ENCODE measurements at regions of chr7 and their contacts with region 1.

Region 1: DNA sequence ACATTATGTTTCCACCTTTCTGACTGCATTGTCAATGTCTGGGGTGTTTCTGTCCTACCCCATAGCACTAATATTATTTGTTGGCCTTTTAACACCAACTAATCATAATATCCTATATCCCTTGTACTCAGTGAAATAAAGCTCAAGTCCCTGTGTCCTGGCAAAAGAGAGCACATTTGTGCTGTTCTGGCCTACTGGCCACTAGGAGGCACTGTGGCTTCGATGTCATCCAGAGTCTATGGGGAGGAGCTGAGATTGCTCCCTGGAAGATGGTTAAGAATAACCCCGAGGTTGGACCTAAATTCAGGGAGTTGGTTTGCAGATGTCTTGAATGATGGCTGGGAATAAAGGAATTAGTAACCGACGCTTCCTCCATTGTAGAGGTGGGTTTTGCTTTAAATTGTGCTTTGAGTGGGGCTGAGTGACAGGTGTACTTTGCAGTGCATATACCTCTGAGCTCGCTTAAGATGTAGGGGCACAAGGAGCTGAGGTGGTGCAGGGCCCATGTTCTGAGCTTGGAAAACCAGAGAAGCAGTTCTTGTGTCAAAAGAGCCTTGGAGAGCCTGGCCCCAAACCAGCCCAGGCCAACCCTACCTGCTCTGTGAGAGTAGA is 191.2 kb upstream of the PRSS1 start:
- DNase-seq: peak; percentile 48
- H3K4me3 ChIP-seq: no peak overlapping the region
- H3K27ac ChIP-seq: peak overlapping the region; percentile 70
- H3K4me1 ChIP-seq: peaks cover 40% of the 10 kb centered on the region
- H3K27me3 ChIP-seq: no peaks in the 10 kb centered on the region
- CTCF ChIP-seq: peak; percentile 62 to 89
- POLR2A ChIP-seq: no peak

Region 2: DNA sequence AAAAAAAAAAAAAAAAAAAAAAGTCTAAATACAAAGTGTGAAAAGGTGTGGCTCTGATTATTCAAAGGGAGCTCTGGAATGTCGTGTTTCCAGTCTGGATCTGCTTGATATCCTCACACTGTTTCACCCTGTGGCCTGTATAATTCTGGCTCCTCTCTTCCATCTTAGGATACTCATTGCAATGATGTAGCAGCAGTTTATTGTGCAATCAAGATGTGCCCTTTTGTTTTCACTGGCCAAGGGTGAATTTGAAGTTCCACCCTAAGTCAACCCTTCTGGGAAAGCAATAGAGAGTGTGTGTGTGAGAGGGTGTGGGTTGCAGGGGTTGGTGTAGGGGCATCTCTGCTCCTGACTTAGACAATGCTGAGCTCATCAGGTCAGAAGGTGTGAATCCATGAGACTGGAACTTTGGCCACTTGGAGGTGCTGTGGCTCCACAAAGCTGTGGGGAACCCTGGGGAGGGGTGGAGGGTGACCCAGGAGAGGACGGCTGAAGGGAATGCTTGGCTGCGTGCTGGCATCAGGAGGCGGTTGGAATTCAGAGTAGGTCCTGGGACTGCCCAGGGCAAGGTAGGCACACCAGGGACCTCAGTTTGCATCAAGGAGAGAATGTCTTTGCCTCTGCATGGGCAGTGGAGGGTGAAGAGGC is 182.3 kb before region 1 on chr7:
- CTCF ChIA-PET with region 1: no interaction called
- POLR2A ChIA-PET with region 1: no interaction called
- dilution Hi-C with region 1: no loop called
- intact Hi-C with region 1: no loop called
- DNase-seq: peak; percentile 28
- H3K4me3 ChIP-seq: no peak overlapping the region
- H3K27ac ChIP-seq: no peak overlapping the region
- H3K4me1 ChIP-seq: peaks cover 11% of the 10 kb centered on the region
- H3K27me3 ChIP-seq: no peaks in the 10 kb centered on the region
- CTCF ChIP-seq: peak in 1 of 2 donors; percentile 13
- POLR2A ChIP-seq: no peak

Region 3: GRCh38 chr7:142546452-142546851 is 11.6 kb before region 1 on chr7:
- CTCF ChIA-PET with region 1: interaction called, 12 read pairs
- POLR2A ChIA-PET with region 1: no interaction called
- dilution Hi-C with region 1: no loop called
- intact Hi-C with region 1: no loop called
- DNase-seq: no peak
- H3K4me3 ChIP-seq: no peak overlapping the region
- H3K27ac ChIP-seq: no peak overlapping the region
- H3K4me1 ChIP-seq: no peaks in the 10 kb centered on the region
- H3K27me3 ChIP-seq: no peaks in the 10 kb centered on the region
- CTCF ChIP-seq: no peak
- POLR2A ChIP-seq: no peak

Region 4: DNA sequence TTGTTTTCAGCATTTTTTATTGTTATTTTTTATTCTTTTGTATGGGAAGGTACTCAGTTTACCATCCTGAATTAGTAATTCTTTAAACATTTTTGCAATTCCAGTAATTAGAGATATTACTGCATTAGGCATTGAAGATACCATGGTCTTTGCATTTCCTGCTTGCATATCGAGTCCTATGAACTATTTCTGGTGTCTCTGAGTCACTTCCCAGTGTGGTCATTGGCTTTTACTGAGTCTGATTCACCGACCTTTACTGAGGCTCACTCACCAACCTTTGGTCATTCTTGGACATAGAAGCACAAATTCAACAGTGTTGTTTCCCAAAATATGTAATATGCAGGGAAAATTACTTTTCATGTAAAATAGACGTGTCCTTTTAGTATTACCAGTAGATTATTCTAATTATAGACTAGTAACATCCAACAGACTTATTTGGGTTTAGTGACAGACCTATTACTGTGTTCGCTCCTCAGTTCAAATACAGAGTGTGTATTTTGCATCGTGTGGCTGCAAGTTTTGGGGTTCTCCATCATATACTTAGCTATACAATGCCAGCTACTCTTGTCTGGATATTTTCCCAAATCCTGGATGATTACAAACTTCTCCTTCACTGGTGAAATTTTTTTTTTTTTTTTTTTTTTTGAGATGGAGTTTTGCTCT is 10.5 kb after region 1 on chr7:
- CTCF ChIA-PET with region 1: interaction called, 47 read pairs
- POLR2A ChIA-PET with region 1: no interaction called
- dilution Hi-C with region 1: no loop called
- intact Hi-C with region 1: loop called (anchors 1 kb)
- DNase-seq: peak; percentile 80
- H3K4me3 ChIP-seq: no peak overlapping the region
- H3K27ac ChIP-seq: peak overlapping the region; percentile 44
- H3K4me1 ChIP-seq: peaks cover 27% of the 10 kb centered on the region
- H3K27me3 ChIP-seq: no peaks in the 10 kb centered on the region
- CTCF ChIP-seq: no peak
- POLR2A ChIP-seq: peak; percentile 41

Region 5: DNA sequence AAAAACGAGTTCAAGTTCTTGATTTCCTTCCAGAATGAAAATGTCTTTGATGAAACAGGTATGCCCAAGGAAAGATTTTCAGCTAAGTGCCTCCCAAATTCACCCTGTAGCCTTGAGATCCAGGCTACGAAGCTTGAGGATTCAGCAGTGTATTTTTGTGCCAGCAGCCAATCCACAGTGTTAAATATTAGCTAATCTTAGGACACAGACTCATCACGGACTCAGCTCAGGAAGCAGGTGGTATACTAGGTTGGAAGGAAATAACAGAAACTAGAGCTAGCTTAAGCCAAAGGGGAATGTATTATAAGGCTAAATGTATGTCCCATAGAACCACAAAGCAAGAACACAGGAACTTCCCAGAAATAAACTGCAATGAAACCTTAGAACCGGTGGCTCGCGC is 40.2 kb after region 1 on chr7:
- CTCF ChIA-PET with region 1: interaction called, 28 read pairs
- POLR2A ChIA-PET with region 1: no interaction called
- dilution Hi-C with region 1: no loop called
- intact Hi-C with region 1: no loop called
- DNase-seq: no peak
- H3K4me3 ChIP-seq: no peak overlapping the region
- H3K27ac ChIP-seq: no peak overlapping the region
- H3K4me1 ChIP-seq: no peaks in the 10 kb centered on the region
- H3K27me3 ChIP-seq: no peaks in the 10 kb centered on the region
- CTCF ChIP-seq: no peak
- POLR2A ChIP-seq: no peak